ENCODE measurements at regions of chr5 and their contacts with region 1.

Region 1: GRCh38 chr5:122415030-122415800 is 103.2 kb downstream of the SNCAIP start:
- DNase-seq: peak; percentile 24
- H3K4me3 ChIP-seq: no peak overlapping the region
- CTCF ChIP-seq: peak; percentile 78

Region 2: GRCh38 chr5:122366501-122366900 is 48.7 kb before region 1 on chr5:
- CTCF ChIA-PET with region 1: no interaction called
- POLR2A ChIA-PET with region 1: no interaction called
- DNase-seq: no peak
- H3K4me3 ChIP-seq: no peak overlapping the region
- CTCF ChIP-seq: no peak

Region 3: GRCh38 chr5:122404018-122404417 is 11.2 kb before region 1 on chr5:
- CTCF ChIA-PET with region 1: interaction called, 13 read pairs
- POLR2A ChIA-PET with region 1: no interaction called
- DNase-seq: no peak
- H3K4me3 ChIP-seq: no peak overlapping the region
- CTCF ChIP-seq: no peak

Measured in AG04449 (cell line).